ENCODE measurements at regions of chr1 and their contacts with region 1.

Region 1: GRCh38 chr1:77961392-77961791 is 17.5 kb downstream of the FUBP1 start:
- DNase-seq: no peak
- ATAC-seq: no peak
- H3K4me3 ChIP-seq: no peak overlapping the region
- H3K27ac ChIP-seq: no peak overlapping the region
- H3K4me1 ChIP-seq: no peaks in the 10 kb centered on the region
- H3K27me3 ChIP-seq: no peaks in the 10 kb centered on the region
- CTCF ChIP-seq: no peak

Region 2: DNA sequence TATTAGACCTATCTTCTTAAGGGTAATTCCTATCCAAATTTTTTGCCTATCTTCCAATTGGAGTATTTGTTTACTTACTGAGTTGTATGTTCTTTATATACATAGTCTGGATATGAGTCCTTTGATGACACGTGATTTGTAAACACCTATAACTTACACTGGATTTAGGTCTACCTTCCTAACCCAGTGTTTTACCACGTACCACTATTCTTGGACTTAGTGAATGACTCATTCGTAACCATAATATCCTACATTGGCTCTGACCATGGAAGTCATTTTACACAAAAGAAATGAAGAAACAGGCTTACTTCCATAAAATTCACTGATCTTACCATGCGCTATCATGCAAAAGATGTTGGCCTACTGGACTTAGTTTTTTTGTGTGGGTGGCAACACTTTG is 255.1 kb before region 1 on chr1:
- intact Hi-C with region 1: loop called in 1 of 2 experiments (anchors 5 kb)
- DNase-seq: no peak
- ATAC-seq: no peak
- H3K4me3 ChIP-seq: no peak overlapping the region
- H3K27ac ChIP-seq: no peak overlapping the region
- H3K4me1 ChIP-seq: no peaks in the 10 kb centered on the region
- H3K27me3 ChIP-seq: no peaks in the 10 kb centered on the region
- CTCF ChIP-seq: no peak

Region 3: GRCh38 chr1:77725706-77726105 is 235.7 kb before region 1 on chr1:
- intact Hi-C with region 1: loop called in 1 of 2 experiments (anchors 10 kb)
- DNase-seq: no peak
- ATAC-seq: no peak
- H3K4me3 ChIP-seq: no peak overlapping the region
- H3K27ac ChIP-seq: no peak overlapping the region
- H3K4me1 ChIP-seq: no peaks in the 10 kb centered on the region
- H3K27me3 ChIP-seq: no peaks in the 10 kb centered on the region
- CTCF ChIP-seq: no peak

Region 4: GRCh38 chr1:77817368-77818209 is 143.8 kb before region 1 on chr1:
- intact Hi-C with region 1: loop called in 1 of 2 experiments (anchors 10 kb)
- DNase-seq: no peak
- ATAC-seq: no peak
- H3K4me3 ChIP-seq: no peak overlapping the region
- H3K27ac ChIP-seq: no peak overlapping the region
- H3K4me1 ChIP-seq: no peaks in the 10 kb centered on the region
- H3K27me3 ChIP-seq: no peaks in the 10 kb centered on the region
- CTCF ChIP-seq: no peak

Region 5: DNA sequence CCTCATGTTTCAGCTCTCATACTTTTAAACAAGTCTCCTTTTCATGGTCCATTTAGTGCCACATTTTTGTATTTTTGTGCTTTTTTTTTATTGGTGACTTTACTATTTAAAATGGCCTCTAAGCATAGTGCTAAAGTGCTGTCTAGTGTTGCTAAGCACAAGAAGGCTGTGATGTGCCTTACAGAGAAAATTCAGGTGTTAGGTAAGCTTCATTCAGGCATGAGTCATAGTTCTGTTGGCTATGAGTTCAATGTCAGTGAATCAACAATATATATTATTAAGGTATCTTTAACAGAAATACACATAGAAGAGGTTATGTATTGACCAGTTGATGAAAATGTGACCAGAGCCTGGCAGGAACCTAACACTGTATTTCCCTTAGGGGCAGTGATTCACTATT is 30.2 kb after region 1 on chr1:
- intact Hi-C with region 1: no loop called
- DNase-seq: no peak
- ATAC-seq: no peak
- H3K4me3 ChIP-seq: no peak overlapping the region
- H3K27ac ChIP-seq: no peak overlapping the region
- H3K4me1 ChIP-seq: peaks cover 11% of the 10 kb centered on the region
- H3K27me3 ChIP-seq: no peaks in the 10 kb centered on the region
- CTCF ChIP-seq: no peak

Measured in psoas muscle (tissue), 8 donors.